A549 (cell line): ENCODE measurements at regions of chr7 and their contacts with region 1.

Region 1: DNA sequence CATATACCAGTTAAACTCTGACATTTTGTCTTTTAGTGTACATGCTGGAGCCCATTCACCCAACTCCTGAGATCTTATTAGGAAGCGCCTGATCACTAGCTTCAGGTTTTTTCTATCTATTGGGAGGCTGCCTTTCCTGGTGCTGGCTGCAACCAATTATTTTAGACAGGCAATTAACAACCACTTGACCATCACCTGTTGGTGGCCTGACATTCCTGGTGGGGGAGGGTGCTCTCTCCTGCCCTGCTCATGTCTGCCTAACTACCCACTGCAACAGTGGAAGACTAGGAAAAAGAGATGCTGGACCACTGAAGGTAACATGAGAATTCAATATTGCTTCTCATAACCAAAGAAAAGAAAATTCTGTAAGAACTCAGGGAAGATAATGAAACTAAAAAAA is 190.3 kb upstream of the GRM3 start:
- DNase-seq: no peak
- ATAC-seq: no peak
- H3K4me3 ChIP-seq: no peak overlapping the region
- H3K27ac ChIP-seq: no peak overlapping the region
- H3K4me1 ChIP-seq: no peaks in the 10 kb centered on the region
- CTCF ChIP-seq: no peak
- EP300 ChIP-seq: no peak
- POLR2A ChIP-seq: no peak
- RAD21 ChIP-seq: no peak

Region 2: GRCh38 chr7:86437951-86438450 is 15.5 kb before region 1 on chr7:
- CTCF ChIA-PET with region 1: no interaction called
- POLR2A ChIA-PET with region 1: no interaction called
- DNase-seq: no peak
- ATAC-seq: no peak
- H3K4me3 ChIP-seq: no peak overlapping the region
- H3K27ac ChIP-seq: no peak overlapping the region
- H3K4me1 ChIP-seq: no peaks in the 10 kb centered on the region
- CTCF ChIP-seq: no peak
- EP300 ChIP-seq: no peak
- POLR2A ChIP-seq: no peak
- RAD21 ChIP-seq: no peak

Region 3: DNA sequence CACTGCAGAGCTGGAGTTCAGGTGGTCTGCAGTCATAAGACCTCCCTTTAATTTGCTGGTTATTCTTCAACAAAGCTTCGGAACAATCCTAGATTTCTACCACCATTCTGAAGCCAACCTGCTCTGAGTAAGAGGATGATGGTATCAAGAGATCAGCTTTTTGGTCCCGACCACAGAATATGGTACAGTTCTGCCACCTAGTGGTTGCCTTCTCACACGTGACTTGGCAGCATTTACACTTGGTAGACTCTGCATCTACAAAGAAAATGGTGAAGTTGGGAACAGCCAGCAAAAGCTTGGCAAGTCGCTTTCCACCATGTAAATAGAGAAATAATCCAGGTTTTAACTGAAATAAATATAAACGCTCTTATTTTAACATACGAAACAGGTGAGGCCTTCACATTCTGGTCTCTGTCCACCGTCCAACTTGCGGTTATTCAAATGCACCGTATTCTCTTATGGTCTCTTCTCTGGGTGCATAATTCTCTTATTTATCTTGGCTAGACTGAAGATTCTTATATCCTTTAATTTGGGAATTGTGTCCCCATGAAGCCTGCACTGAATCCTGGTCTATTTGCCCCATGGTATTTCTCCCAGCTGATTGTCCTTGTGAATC is 16.3 kb after region 1 on chr7:
- CTCF ChIA-PET with region 1: interaction called, 11 read pairs
- POLR2A ChIA-PET with region 1: no interaction called
- DNase-seq: peak; percentile 15 to 78
- ATAC-seq: peak; percentile 90 to 91
- H3K4me3 ChIP-seq: no peak overlapping the region
- H3K27ac ChIP-seq: no peak overlapping the region
- H3K4me1 ChIP-seq: no peaks in the 10 kb centered on the region
- CTCF ChIP-seq: peak; percentile 74
- EP300 ChIP-seq: no peak
- POLR2A ChIP-seq: no peak
- RAD21 ChIP-seq: peak; percentile 72 to 83